ENCODE measurements at regions of chr15 and their contacts with region 1.

Region 1: GRCh38 chr15:39801641-39802309 is 19.1 kb upstream of the FSIP1 start:
- DNase-seq: peak; percentile 66
- CTCF ChIP-seq: peak; percentile 62

Region 2: GRCh38 chr15:39874890-39875549 is 73.2 kb after region 1 on chr15:
- in situ Hi-C with region 1: loop called (anchors 5 kb)
- DNase-seq: peak; percentile 29
- CTCF ChIP-seq: peak; percentile 37

Region 3: DNA sequence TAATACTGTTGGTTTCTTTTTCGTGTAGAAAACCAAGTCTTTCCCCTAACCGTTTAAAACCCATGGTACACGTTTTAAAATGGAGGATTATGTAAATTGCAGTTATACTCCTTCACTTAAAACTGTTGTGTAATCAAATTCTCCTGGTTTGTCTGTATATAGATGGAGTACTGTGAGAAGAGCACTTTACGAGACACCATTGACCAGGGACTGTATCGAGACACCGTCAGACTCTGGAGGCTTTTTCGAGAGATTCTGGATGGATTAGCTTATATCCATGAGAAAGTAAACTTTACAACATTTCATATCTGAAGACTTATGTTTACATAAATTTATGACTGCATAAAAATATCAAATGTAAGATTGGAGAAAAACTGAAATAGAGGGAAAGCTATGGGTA is 186.0 kb after region 1 on chr15:
- in situ Hi-C with region 1: no loop called
- DNase-seq: no peak
- CTCF ChIP-seq: no peak

Region 4: GRCh38 chr15:40010686-40011085 is 208.9 kb after region 1 on chr15:
- in situ Hi-C with region 1: loop called (anchors 10 kb)
- DNase-seq: no peak
- CTCF ChIP-seq: no peak

Region 5: DNA sequence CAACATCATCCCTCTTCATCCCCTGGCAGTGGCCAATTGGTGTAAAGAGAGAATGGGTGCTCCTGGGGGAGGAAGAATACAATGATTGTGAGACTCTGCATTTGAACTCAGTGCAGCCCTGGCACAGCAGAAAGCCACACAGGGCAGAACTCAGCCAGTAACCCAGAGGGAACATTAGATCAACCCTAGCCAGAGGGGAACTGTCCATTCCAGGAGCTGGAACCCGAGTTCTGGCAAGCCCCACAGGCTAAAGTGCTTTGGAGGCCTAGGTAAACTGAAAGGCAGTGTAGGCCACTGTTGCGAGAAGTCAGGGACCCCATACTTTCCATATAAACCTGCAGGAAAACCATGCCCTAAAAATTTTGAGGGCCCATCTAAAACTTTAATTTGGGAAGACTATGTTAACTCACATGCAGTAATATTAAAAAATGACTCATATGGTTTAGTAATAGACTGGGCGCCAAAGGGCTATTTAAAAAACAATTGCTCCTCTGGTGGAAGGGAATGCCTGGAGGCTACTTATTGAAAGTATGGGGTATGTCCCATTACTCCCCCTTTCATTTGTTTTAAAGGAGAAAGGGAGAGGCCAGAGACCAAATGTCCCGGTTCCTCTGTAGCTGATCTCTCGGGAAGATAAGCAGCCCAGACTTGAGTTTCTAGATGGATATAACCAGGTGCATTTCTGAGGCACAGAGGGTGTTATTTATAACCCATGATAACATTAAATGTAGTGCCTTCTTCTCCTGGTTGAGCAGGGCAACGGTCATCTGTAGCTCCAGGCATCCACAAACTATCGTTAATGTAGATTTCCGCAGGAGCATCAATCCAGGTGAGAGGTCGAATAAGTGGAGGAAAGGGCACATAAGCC is 887.4 kb after region 1 on chr15:
- in situ Hi-C with region 1: no loop called
- DNase-seq: no peak
- CTCF ChIP-seq: no peak

Measured in GM13976 (cell line).